ENCODE measurements at regions of chr4 and their contacts with region 1.

Region 1: GRCh38 chr4:5045097-5045496 is 6.2 kb upstream of the STK32B start:
- DNase-seq: no peak
- ATAC-seq: peak; percentile 40
- H3K4me3 ChIP-seq: no peak overlapping the region
- H3K27ac ChIP-seq: no peak overlapping the region
- H3K4me1 ChIP-seq: peaks cover 2% of the 10 kb centered on the region; the same call in 1 of the 2 replicates
- H3K27me3 ChIP-seq: no peaks in the 10 kb centered on the region; the same call in none of the 2 replicates
- CTCF ChIP-seq: no peak
- POLR2A ChIP-seq: no peak
- RAD21 ChIP-seq: no peak

Region 2: DNA sequence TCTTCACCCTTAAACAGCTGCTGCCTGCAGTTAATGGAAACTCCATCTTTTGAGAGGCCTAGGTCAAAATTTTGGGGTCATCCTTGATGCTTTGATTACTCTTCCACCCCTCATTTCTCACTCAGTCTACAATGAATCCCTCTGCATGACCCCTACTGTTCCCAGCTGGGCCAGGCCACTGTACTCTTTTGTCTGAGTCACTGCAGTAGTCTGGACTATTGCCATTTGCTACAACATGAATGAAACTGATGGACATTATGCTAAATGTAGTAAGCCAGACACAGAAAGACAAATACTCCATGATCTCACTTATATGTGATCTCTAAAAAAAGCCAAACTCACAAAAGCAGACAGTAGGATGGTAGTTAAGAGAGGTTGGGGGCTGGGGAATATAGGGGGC is 34.5 kb after region 1 on chr4:
- CTCF ChIA-PET with region 1: no interaction called
- POLR2A ChIA-PET with region 1: no interaction called
- dilution Hi-C with region 1: no loop called
- in situ Hi-C with region 1: no loop called
- intact Hi-C with region 1: no loop called
- DNase-seq: peak; percentile 49
- ATAC-seq: peak; percentile 56
- H3K4me3 ChIP-seq: no peak overlapping the region
- H3K27ac ChIP-seq: no peak overlapping the region
- H3K4me1 ChIP-seq: no peaks in the 10 kb centered on the region
- H3K27me3 ChIP-seq: no peaks in the 10 kb centered on the region
- CTCF ChIP-seq: no peak
- POLR2A ChIP-seq: no peak
- RAD21 ChIP-seq: no peak

Region 3: GRCh38 chr4:5157791-5158770 is 113.0 kb after region 1 on chr4:
- CTCF ChIA-PET with region 1: no interaction called
- POLR2A ChIA-PET with region 1: no interaction called
- dilution Hi-C with region 1: no loop called
- in situ Hi-C with region 1: no loop called
- intact Hi-C with region 1: no loop called
- DNase-seq: peak; percentile 44
- ATAC-seq: peak; percentile 79
- H3K4me3 ChIP-seq: no peak overlapping the region
- H3K27ac ChIP-seq: peak overlapping the region; percentile 32; the same call in 1 of the 2 replicates
- H3K4me1 ChIP-seq: peaks cover 14% of the 10 kb centered on the region
- H3K27me3 ChIP-seq: no peaks in the 10 kb centered on the region
- CTCF ChIP-seq: no peak
- POLR2A ChIP-seq: no peak
- RAD21 ChIP-seq: no peak

Region 4: DNA sequence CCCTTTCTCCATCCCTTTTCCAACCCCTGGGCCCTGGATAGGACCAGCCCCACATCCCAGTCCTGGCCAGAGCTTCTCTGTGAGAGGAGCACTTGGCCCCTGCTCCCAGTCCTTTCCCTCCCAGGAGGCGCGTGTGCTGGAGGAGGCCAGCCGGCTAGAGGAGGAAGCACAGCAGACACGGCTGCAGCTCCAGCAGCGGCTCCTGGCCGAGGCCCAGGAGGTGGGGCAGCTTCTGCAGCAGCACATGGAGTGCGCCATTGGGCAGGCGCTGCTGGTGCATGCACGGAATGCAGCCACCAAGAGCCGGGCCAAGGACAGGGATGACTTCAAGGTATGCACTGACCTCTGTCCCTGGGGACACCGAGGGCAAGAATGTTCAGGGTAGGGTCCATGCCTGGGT is 753.4 kb after region 1 on chr4:
- CTCF ChIA-PET with region 1: no interaction called
- POLR2A ChIA-PET with region 1: no interaction called
- dilution Hi-C with region 1: no loop called
- in situ Hi-C with region 1: loop called (anchors 10 kb)
- intact Hi-C with region 1: no loop called
- DNase-seq: no peak
- ATAC-seq: no peak; the same call in 1 of the 2 replicates
- H3K4me3 ChIP-seq: no peak overlapping the region
- H3K27ac ChIP-seq: no peak overlapping the region
- H3K4me1 ChIP-seq: peaks cover 3% of the 10 kb centered on the region; the same call in 1 of the 2 replicates
- H3K27me3 ChIP-seq: no peaks in the 10 kb centered on the region
- CTCF ChIP-seq: no peak
- POLR2A ChIP-seq: no peak
- RAD21 ChIP-seq: no peak

Measured in IMR-90 (cell line).